HEK293 (cell line): ENCODE measurements at regions of chr5 and their contacts with region 1.

Region 1: GRCh38 chr5:66987949-66988838 is 208.4 kb downstream of the CD180 start:
- H3K4me3 ChIP-seq: no peak overlapping the region
- H3K27ac ChIP-seq: no peak overlapping the region
- H3K4me1 ChIP-seq: peaks cover 9% of the 10 kb centered on the region
- CTCF ChIP-seq: peak; percentile 30

Region 2: GRCh38 chr5:66969961-66970360 is 18.2 kb before region 1 on chr5:
- CTCF ChIA-PET with region 1: interaction called, 11 read pairs
- POLR2A ChIA-PET with region 1: no interaction called
- H3K4me3 ChIP-seq: no peak overlapping the region
- H3K27ac ChIP-seq: no peak overlapping the region
- H3K4me1 ChIP-seq: peaks cover 2% of the 10 kb centered on the region; the same call in 1 of the 2 replicates
- CTCF ChIP-seq: no peak

Region 3: DNA sequence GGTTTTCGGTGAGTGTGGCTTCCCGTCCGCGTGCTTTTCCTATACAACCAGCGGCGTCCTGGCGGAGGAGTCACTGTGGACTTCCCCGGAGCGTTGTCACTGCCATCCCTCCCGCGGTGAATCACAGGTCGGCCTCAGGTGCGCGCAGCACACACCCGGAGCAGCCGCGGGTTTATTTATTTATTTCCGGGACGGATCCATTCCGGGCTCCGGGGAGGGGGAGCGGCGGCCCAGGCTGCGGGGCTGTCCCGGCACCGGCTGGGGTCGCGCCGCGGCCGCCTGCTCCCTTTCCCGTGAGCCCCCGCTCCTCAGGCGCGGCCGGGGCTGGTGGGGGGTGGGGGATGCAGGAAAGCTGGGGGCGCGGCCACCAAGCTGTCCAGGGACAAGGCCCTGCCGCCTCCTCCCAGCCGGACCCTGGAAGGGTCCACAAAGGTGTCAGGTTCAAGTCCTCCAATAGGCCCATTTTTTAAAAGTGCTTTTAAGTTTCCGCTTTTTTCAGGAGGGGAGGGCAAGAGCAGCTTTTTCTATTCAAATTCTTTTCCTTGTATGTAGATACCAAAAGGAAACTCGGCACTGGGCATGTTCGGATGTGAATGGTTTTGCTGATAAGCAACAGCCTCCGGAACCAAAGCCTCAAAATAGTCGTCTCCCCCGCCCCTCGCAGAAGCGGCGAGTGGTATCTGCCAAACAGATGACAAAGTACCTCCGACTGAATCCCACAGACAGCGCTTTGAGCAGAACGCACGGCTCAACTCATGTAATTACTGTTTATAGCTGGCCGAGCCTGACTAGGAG is 15.9 kb after region 1 on chr5:
- CTCF ChIA-PET with region 1: interaction called, 26 read pairs
- POLR2A ChIA-PET with region 1: interaction called, 3 read pairs
- H3K4me3 ChIP-seq: peak overlapping the region; percentile 56
- H3K27ac ChIP-seq: peak overlapping the region; percentile 73
- H3K4me1 ChIP-seq: no peaks in the 10 kb centered on the region
- CTCF ChIP-seq: no peak

Region 4: DNA sequence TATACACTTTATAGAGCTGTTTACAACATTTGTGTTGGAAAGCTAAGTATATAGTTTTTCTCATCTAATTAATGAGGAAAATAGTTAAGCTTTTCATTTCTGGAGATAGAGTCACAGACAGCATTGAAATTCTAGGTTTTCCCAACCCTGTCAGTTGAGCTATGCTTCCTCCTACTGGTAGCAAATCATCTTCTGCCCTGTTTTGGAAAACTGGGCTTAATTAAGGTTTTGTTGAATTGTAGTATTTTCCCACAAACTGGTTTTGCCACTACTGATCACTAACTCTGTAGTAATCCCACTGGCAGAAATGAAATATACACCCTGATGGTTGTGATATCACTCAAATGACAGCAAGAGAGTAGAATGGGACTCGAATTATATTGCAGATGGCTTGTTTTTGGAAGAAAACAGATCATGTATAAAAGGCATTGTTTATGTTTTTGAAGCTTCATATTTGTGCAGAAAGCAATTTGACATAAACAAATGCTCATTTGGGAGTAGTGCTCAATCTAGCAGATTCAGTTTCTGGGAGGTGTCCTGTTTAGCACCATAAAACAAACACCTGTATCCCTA is 161.8 kb after region 1 on chr5:
- CTCF ChIA-PET with region 1: interaction called, 11 read pairs
- POLR2A ChIA-PET with region 1: no interaction called
- H3K4me3 ChIP-seq: no peak overlapping the region
- H3K27ac ChIP-seq: no peak overlapping the region
- H3K4me1 ChIP-seq: no peaks in the 10 kb centered on the region
- CTCF ChIP-seq: peak; percentile 30; the same call in 1 of the 2 replicates